Aorta (tissue), 5 donors: ENCODE measurements at regions of chr14 and their contacts with region 1.

Region 1: DNA sequence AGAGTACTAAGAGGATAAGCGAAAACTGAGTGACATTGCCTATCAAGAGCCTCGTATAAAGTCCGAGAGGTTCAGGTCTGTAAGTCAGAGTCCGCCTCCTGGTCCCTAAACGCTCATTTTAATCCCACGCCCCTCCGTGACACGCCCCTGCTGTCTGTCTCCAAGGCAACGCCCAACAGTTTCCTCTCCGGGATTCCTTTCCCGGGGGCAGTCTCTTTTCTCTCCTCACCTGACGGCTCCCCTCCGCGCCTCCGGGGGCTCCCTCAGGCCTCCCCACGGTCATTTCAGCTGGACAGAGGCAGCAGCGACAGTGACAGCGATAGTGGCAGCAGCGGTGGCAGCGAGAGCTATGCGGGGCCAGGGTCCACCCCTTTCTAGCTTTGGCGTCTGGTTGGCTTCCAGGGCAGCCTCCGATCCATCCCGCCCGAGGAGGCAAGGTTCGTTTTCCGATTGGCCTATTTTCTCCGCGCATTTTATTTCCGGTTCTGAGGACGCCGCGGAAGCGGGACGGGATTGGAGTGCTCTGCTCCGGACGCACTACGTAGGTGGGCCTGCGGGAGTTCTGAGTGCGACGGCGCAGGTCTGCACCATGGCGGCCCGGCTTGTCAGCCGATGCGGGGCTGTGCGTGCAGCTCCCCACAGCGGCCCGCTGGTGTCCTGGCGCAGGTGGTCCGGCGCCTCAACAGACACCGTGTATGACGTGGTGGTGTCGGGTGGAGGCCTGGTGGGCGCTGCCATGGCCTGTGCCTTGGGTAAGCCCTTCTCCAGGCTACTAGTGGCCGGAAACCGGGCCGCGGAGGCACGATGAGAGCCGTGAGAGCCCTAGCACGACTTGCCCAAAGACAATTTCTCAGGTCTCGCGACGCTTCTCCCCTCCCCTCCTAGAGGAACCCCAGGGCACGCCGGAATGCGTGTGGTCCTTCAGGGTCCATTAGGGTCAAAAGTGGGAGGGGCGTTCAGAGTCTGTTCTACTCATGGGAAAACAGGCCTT is at the starts of genes COQ6 and FAM161B:
- DNase-seq: peak; percentile 96
- ATAC-seq: peak; percentile 98
- H3K4me3 ChIP-seq: peak within 1 kb of the TSS; percentile 45 to 60
- H3K27ac ChIP-seq: peak within 1 kb of the TSS in 1 of 2 donors; percentile 76
- H3K4me1 ChIP-seq: no peaks in the 10 kb centered on the region
- H3K27me3 ChIP-seq: no peaks in the 10 kb centered on the region
- total RNA-seq, gene COQ6: 17.5 to 21.5 TPM
- total RNA-seq, gene FAM161B: 4.7 to 6.7 TPM

Region 2: DNA sequence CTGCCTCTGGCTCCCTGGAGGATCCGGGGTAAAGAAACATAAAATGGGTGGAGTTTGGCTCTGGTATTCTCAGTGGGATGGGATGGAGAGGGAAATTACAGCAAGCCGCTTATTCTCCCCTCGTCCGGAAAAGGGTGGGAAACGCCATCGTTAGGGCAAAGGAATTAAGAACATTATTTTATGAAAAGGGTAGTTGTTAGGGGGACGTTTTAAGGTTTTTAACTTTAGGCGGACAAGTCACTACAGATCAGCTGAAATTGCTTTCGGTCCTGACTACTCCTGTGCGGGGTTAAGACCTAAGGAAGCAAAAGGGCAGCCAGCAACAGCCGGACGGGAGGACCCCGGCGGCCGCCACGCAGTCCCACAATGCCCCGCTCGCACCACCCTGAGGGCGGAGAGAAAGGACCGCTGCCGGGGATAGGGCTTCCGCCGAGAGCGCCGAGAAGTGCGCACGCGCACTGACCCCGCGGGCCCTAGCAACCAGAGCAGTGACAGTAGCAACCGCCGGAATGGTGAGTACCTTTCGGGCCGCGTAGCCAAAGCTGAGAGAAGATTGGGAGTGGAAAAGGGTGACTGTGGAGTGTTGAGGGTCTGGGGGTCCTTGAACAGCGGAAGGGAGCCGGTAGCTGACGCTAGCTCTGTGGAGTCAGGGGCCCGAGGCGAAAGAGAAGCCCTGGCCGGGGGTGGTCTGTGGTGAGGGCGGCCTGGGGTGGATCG is 305.4 kb before region 1 on chr14 and contains the start of gene DNAL1:
- intact Hi-C with region 1: loop called in 1 of 2 experiments (anchors 10 kb)
- DNase-seq: peak; percentile 96 to 98
- ATAC-seq: peak; percentile 100
- H3K4me3 ChIP-seq: peak within 1 kb of the TSS; percentile 55 to 70
- H3K27ac ChIP-seq: peak within 1 kb of the TSS; percentile 7 to 39
- H3K4me1 ChIP-seq: no peaks in the 10 kb centered on the region
- H3K27me3 ChIP-seq: no peaks in the 10 kb centered on the region
- total RNA-seq, gene DNAL1: 13.0 to 17.2 TPM

Region 3: DNA sequence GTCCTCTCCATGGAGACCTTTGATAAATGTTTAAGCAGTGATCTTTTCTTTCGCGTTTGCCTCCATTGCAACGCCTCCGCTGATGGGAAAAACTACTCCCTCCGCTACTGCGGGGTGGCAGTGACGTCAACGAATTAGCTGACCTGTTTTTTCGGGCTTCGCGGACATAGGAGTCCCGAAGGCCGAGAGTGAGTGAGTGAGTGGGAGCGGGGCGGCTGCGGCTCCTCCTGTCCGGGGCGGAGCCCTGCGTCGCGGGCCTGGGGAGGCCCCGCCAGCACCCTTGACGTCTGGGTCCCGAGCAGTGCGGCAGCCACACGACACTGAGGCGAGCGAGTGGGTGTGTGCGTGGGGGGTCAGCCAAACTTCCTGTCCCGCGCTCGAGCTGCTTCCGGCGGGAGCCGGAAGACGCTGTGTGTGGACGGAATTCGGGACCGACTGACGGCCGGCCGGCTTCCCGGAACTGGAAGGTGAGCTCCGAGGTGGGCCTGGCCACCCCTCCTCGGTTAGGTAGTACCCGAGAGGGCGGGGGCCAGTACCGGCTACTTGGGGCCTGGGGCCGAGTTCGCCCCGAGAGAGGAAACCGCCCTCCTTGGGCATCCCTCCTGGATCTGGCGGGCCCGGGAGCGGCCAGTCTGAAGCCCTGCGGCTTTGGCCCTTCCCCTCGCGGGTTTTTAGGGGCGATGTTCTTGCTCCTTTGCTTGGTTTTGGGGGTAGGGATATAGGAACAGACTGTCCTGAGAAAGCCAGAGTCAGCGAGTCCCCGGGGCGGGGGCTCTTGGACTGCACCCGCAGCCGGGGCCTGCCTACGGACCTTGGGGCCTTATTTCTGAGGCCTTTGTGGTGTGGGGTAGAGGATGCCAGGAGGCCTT is 63.4 kb before region 1 on chr14 and contains the start of gene ZNF410:
- intact Hi-C with region 1: loop called in 1 of 2 experiments (anchors 2 kb)
- DNase-seq: peak; percentile 97
- ATAC-seq: peak; percentile 99
- H3K4me3 ChIP-seq: peak within 1 kb of the TSS; percentile 82 to 98
- H3K27ac ChIP-seq: peak within 1 kb of the TSS; percentile 78 to 92
- H3K4me1 ChIP-seq: peaks cover 0 to 4% of the 10 kb centered on the region in 2 donors
- H3K27me3 ChIP-seq: no peaks in the 10 kb centered on the region
- total RNA-seq, gene ZNF410: 42.9 to 45.7 TPM

Region 4: DNA sequence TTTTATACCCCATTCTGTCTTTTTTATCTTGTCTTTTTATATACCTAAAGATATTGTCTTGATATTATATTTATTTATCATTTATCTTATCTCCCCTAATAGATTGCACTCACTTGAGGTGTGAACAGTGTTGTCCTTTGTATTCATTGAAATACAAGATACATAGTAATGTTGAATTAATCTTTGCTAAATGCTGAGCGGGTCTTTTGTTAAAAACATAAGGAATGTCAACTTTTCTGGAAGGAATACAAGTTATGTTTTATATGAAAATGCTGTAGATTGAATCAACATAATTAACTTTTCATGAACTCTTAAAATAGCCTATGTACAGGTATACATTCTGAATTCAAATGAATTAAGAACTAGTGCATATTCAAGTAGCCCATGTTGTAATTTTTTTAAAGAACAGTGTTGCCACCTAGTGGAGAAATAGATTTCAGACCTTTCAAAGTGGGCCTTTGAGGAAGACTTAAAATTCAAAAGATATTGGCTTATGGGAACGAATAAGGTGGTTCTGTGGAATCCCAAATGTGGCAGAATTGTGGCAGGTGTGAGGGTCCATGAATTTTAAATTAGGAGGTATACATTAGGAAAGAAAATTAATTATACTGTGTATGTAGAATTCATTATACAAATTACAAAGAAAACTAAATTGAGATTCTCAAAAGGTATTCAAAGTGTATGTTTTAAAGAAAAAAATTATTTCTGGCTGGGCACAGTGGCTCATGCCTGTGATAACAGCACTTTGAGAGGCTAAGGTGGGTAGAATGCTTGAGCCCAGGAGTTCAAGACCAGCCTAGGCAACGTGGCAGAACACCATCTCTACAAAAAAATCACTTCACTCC is 88.2 kb after region 1 on chr14:
- intact Hi-C with region 1: loop called in 1 of 2 experiments (anchors 5 kb)
- DNase-seq: no peak
- ATAC-seq: no peak
- H3K4me3 ChIP-seq: no peak overlapping the region
- H3K27ac ChIP-seq: no peak overlapping the region
- H3K4me1 ChIP-seq: no peaks in the 10 kb centered on the region
- H3K27me3 ChIP-seq: no peaks in the 10 kb centered on the region